Endothelial cell of umbilical vein (primary cell): ENCODE measurements at regions of chr11 and their contacts with region 1.

Region 1: DNA sequence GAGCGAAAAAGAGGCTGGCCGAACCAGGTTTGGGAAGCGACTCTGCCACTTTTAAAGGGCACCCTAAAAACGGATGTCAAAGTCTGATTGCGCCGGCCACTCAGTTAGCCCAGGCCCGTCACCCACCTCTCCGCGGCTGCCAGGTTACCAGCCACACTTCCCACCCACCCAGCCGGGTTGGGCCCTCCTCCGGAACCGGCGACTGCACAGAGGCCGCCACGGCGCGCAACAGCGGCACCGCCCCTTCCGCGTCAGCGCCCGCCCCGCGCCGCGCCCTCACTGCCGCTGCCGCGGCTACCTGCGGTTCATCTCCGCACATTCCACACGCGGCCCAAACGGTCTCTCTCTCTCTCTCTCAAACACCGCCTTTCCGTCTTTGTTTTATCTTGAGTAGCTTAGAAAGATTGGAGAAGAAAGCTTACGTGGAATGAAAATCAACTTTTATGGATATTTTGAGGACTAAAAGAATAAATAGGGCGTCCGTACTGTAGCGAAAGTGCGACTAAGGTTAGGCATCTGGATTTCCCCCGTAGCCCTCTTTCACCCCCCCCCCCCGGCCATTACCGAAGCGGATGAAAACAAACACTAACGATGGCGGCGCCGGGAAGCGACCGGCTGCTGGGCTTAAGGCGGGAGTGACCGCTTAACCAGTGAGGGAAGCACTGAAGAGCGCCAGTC is at the starts of genes ATG13 and HARBI1:
- DNase-seq: peak; percentile 89
- H3K4me3 ChIP-seq: peak within 1 kb of the TSS; percentile 64 to 97 (median 86)
- H3K27ac ChIP-seq: peak within 1 kb of the TSS; percentile 96
- H3K4me1 ChIP-seq: peaks cover 19% of the 10 kb centered on the region
- H3K27me3 ChIP-seq: no peaks in the 10 kb centered on the region
- CTCF ChIP-seq: no peak
- POLR2A ChIP-seq: peak; percentile 93
- total RNA-seq, gene ATG13: 66.5 and 67.3 TPM in 2 replicates
- total RNA-seq, gene HARBI1: 3.2 and 4.7 TPM in 2 replicates

Region 2: DNA sequence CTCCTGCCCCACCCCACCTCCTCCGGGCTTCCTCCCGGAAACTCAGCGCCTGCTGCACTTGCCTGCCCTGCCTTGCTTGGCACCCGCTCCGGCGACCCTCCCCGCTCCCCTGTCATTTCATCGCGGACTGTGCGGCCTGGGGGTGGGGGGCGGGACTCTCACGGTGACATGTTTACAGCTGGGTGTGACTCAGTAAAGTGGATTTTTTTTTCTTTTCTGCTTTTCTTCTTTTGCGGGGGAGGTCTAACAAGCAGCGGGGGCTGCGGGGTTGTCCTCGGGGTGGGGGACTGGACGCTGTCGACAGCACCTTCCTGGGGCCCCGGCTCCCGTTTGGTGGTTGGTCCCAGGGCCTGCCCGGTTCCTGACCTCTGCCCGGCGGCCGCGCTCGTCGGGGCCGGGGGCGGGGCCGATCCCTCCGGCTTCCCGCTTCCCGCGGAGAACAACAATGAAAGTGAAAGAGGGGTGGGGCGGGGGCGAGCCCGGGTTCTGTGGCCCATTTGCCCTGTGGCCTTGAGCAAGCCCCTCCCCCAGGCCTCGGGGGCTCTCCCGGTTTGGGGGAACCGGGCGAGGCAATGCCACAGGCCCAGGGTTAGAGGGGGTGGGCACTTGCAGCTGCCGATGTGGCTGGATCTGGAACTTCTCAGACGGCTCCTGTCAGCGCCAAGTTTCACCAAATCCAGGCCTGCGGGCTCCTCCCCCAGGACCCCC is 236.6 kb before region 1 on chr11:
- CTCF ChIA-PET with region 1: interaction called, 4 read pairs
- POLR2A ChIA-PET with region 1: no interaction called
- dilution Hi-C with region 1: no loop called
- intact Hi-C with region 1: loop called (anchors 2 kb)
- DNase-seq: peak; percentile 67
- H3K4me3 ChIP-seq: peak overlapping the region; percentile 62 to 84 (median 72)
- H3K27ac ChIP-seq: peak overlapping the region; percentile 61
- H3K4me1 ChIP-seq: peaks cover 11% of the 10 kb centered on the region
- H3K27me3 ChIP-seq: no peaks in the 10 kb centered on the region
- CTCF ChIP-seq: no peak
- POLR2A ChIP-seq: no peak

Region 3: GRCh38 chr11:46554205-46555055 is 62.7 kb before region 1 on chr11:
- CTCF ChIA-PET with region 1: interaction called, 11 read pairs
- POLR2A ChIA-PET with region 1: no interaction called
- dilution Hi-C with region 1: no loop called
- intact Hi-C with region 1: loop called (anchors 2 kb)
- DNase-seq: peak; percentile 84
- H3K4me3 ChIP-seq: peak overlapping the region in 1 of 3 experiments; percentile 10
- H3K27ac ChIP-seq: peak overlapping the region; percentile 74
- H3K4me1 ChIP-seq: peaks cover 32% of the 10 kb centered on the region
- H3K27me3 ChIP-seq: no peaks in the 10 kb centered on the region
- CTCF ChIP-seq: no peak
- POLR2A ChIP-seq: no peak

Region 4: DNA sequence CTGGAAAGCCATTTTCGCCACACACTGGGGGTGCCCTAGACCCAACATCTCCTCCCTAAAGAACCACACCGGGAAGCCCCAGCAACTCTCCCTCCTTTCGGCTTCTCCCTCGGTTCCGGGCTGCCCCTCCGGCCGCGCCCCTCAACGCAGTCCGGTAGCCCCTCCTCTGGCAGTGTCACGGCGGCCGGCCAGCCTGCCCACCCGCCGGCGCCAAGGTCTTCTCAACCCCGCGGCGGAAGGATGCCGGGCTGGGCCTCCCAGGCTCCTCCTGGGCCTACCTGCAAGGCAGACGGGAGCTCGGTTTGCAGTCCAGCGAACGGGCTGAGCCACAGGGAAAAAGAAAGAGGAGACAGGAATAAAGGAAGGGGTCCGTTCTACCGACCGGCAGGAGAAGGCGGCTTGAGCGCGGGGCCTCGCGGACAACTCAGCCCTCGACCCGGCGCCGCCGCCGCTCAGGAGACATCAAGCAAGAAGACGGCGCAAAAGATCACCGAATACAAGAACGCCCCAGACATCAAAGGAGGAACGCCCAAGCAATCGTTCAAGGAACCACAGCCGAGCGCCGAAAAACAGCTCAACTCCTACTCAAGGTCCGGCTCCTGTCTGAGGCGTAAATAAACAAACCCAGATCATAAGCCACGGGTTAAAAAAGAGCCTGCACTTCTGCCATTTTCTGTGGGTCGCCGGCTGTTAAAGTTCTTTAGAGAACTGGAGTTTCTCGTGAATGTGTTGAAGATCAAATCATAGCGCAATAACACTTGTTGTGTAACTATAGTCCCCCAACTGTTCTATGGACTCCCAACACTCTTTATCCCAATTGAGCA is 23.4 kb before region 1 on chr11 and contains the start of gene AMBRA1:
- CTCF ChIA-PET with region 1: interaction called, 8 read pairs
- POLR2A ChIA-PET with region 1: no interaction called
- dilution Hi-C with region 1: no loop called
- intact Hi-C with region 1: loop called (anchors 1 kb)
- DNase-seq: peak; percentile 97
- H3K4me3 ChIP-seq: peak within 1 kb of the TSS; percentile 84 to 90 (median 88)
- H3K27ac ChIP-seq: peak within 1 kb of the TSS; percentile 66
- H3K4me1 ChIP-seq: peaks cover 36% of the 10 kb centered on the region
- H3K27me3 ChIP-seq: no peaks in the 10 kb centered on the region
- CTCF ChIP-seq: no peak
- POLR2A ChIP-seq: peak; percentile 77
- total RNA-seq, gene AMBRA1: 26.5 and 32.4 TPM in 2 replicates

Region 5: DNA sequence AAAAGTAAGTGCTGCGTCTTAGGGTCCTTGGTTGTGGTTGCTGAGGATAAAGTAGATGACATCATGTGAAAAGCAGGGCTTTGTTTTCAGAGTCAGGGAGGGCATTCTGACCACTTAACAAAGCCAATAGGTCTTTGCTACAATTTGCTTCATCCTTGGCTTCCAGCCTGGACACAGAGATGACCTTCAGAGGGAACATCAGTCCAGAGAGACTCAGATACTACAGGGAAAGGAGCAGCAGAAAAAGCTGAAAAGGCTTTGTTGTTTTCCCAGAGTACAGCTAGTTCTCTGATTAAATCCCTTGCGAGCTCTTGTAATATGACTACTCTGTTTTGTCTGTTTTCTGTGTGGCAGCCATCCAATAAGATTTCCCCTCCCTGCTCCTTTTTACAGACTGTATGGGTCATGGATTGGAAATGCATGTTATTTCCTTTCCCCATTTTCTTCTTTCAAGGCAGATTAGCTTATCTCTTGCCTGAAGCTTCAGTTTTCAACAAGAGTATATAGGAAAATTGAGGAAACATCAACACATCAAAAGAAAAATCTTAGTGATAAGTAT is 32.1 kb after region 1 on chr11:
- CTCF ChIA-PET with region 1: interaction called, 6 read pairs
- POLR2A ChIA-PET with region 1: interaction called, 6 read pairs
- dilution Hi-C with region 1: no loop called
- intact Hi-C with region 1: loop called (anchors 1 kb)
- DNase-seq: peak; percentile 98
- H3K4me3 ChIP-seq: peak overlapping the region in 1 of 3 experiments; percentile 51
- H3K27ac ChIP-seq: peak overlapping the region; percentile 99
- H3K4me1 ChIP-seq: peaks cover 29% of the 10 kb centered on the region
- H3K27me3 ChIP-seq: no peaks in the 10 kb centered on the region
- CTCF ChIP-seq: no peak
- POLR2A ChIP-seq: no peak

Region 6: GRCh38 chr11:46747150-46747549 is 130.0 kb after region 1 on chr11:
- CTCF ChIA-PET with region 1: no interaction called
- POLR2A ChIA-PET with region 1: no interaction called
- dilution Hi-C with region 1: no loop called
- intact Hi-C with region 1: no loop called
- DNase-seq: no peak
- H3K4me3 ChIP-seq: no peak overlapping the region
- H3K27ac ChIP-seq: no peak overlapping the region
- H3K4me1 ChIP-seq: no peaks in the 10 kb centered on the region
- H3K27me3 ChIP-seq: no peaks in the 10 kb centered on the region
- CTCF ChIP-seq: no peak
- POLR2A ChIP-seq: no peak